Cardiac septum (tissue), 1 donor: ENCODE measurements at regions of chr3 and their contacts with region 1.

Region 1: GRCh38 chr3:24264748-24265158 is 229.9 kb downstream of the THRB start:
- DNase-seq: no peak

Region 2: DNA sequence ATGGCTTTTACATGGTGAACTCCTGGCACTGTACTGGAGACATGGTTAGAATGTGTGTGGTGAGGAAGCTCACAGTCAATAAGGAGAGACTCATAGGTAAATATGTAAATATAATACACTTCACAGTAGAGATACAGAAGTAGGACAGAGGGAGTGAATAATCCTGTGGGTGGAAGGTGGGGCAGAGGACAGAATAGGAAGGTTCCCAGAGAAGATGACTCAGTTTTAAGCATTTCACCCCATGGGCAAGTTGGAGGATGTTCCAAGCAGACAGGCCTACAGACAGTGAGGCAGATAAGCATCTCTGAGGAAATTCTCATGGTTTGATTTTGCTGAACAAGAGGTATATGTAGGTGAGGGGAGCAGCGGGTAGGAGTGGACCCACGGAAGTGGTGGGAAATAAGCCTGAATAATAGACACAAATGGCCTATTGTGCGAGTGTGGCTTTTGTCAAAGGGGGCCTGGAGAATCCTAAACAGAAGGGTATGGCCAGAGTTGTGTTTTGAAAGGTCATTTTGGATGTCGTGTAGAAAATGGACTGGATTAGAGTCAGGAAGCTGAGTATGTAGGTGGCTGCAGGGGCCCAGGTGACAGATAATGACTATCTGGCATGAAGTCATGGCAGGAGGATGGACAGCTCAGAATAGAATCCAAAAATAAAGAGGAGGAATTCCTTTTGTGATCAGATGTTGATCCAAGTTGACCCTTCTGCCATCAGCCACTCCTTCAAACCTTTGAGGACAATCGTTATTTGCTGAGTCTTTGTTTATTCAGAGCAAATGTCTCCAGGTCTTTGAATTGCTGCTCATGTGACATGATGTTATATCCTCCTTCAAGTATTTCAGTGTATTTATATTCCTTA is 327.1 kb after region 1 on chr3:
- intact Hi-C with region 1: loop called (anchors 5 kb)
- DNase-seq: no peak

Region 3: DNA sequence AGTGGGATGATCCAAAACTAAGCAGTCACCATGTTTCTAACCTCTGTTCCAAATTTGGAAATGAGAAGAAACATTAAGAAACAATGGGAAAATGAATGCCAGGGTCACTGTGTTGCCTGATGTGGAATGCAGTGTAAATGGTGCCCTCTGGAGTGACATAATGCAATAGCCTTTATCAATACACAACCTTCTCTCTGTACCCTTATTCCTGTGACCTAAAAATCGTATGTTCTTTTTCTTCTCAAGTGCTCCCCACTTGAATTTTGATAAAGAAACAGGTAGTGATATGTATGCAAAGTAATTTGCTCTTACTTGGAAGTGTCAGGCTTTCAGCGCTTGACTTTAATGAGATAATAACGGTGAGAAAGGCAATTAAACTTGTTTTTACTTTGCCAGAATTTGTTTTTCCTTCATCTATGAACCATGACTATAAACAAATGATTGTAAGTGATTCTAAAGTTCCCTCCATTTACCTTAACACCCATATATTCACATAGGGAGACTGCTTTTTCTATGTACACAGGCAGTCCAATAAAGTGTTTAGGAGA is 375.7 kb after region 1 on chr3:
- intact Hi-C with region 1: loop called (anchors 10 kb)
- DNase-seq: no peak

Region 4: DNA sequence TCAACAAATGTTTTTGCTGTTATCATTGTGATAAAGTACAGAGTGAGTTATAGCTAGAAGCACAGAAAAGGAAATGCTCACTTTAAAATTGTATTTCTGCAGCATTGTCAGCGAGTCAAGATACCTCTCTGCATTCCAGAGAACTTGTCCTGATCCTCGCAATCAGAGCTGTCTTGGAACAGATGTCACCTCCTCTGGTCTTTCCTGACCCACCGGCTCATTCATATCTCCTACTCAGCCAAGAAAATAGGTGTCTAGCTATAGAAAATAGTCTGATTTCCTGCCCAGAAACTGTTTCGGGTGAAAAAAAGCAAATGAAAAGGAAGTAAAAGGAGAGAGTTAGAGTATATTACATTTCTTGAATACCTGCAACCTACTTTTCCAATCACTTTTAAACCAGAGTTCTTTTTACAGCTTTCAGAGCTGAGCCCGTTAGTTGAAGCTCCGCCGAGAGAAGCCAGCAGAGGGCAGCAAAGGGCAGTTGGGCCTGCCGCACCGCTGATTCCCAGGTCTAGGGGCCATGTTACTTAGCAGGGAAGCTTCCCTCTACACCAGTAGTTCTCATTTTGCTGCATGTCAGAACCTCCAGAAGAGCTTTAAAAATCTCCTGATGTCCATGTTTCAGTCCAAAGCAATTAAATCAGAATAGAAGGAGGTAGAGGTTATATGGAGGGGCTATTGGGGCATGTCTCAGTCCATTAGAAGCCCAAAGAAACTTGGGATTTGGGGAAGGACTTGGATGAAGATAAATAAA is 415.6 kb after region 1 on chr3:
- intact Hi-C with region 1: loop called (anchors 5 kb)
- DNase-seq: peak; percentile 77